Activated CD8-positive, alpha-beta T cell treated with anti-CD3 and anti-CD28 coated beads, Interleukin-2, amount 10 ng/mL, durations not matched to agents 7 days and 5 days (primary cell): ENCODE measurements at regions of chr12 and their contacts with region 1.

Region 1: DNA sequence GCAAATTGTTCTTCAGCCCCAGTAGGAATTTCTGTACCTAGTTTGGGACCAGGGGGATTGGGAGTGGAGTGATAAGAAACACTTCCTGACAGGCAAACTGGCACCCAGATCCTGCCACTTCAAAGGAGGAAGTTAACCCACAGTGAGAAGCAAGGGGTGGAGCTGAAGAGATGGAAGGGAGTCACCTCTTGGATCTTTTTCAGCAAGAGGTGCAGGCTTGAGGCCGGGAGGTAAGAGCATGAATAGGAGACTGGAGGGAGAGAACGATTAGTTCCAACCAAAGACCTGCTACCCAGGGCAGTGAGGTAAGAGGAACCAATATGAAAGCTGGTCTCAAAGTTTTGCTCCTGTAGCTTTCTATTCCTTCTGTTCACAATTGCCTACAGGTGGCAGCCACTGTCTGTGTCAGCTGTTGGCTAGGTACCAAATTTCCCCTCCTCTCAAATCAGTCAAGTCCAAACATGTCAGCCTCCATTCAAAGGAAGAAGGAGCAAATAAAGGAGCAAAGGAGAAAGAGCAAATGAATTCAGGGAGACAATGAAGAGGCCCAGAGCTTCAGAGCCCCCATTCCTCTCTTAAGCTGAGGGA is 14.9 kb upstream of the TAC3 start:
- DNase-seq: peak; percentile 46
- ATAC-seq: peak; percentile 75
- H3K4me3 Mint-ChIP-seq: no peak overlapping the region
- H3K27ac Mint-ChIP-seq: peak overlapping the region; percentile 73
- H3K4me1 Mint-ChIP-seq: peaks cover 35% of the 10 kb centered on the region
- H3K27me3 Mint-ChIP-seq: no peaks in the 10 kb centered on the region

Region 2: GRCh38 chr12:56630160-56630632 is 401.0 kb before region 1 on chr12 and contains the start of gene BAZ2A:
- CTCF ChIA-PET with region 1: no interaction called
- POLR2A ChIA-PET with region 1: no interaction called
- DNase-seq: peak; percentile 92
- ATAC-seq: peak; percentile 74
- H3K4me3 Mint-ChIP-seq: peak within 1 kb of the TSS; percentile 84
- H3K27ac Mint-ChIP-seq: peak within 1 kb of the TSS; percentile 83
- H3K4me1 Mint-ChIP-seq: peaks cover 67% of the 10 kb centered on the region
- H3K27me3 Mint-ChIP-seq: no peaks in the 10 kb centered on the region
- total RNA-seq, gene BAZ2A: 92.2 to 96.0 TPM

Region 3: GRCh38 chr12:57012600-57013465 is 18.4 kb before region 1 on chr12:
- CTCF ChIA-PET with region 1: interaction called, 34 read pairs
- POLR2A ChIA-PET with region 1: no interaction called
- DNase-seq: no peak
- ATAC-seq: no peak
- H3K4me3 Mint-ChIP-seq: no peak overlapping the region
- H3K27ac Mint-ChIP-seq: no peak overlapping the region
- H3K4me1 Mint-ChIP-seq: peaks cover 40% of the 10 kb centered on the region
- H3K27me3 Mint-ChIP-seq: peaks cover 10% of the 10 kb centered on the region

Region 4: DNA sequence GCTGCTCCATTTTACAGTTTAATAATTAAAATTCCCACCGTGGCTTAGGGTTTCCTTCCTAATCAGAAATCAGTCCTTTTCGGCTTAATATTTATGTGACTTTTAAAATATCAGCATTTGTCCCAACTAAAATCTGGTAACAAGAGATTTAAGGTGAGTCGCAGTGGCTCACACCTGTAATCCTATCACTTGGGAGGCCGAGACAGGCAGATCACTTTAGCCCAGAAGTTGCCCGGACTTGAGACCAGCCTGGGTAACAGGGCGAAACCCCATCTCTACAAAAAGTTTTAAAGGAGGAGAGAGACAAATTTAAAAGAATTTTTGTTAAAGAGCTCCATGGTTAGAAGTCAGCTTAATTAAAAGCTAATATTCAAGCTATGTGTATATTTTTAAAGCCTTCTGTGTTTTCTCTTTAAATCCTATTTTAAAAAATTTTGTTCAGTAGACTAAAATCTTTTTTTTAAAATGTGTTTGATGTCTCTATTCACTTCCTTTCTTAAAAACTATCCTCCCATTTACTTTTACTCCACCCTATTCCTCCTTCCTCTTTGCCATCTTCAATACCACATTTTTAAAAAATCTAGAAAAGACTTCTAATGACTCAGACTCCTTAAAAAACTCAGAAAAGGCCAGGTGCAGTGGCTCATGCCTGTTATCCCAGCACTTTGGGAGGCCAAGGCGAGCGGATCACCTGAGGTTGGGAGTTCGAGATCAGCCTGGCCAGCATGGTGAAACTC is 11.1 kb before region 1 on chr12:
- CTCF ChIA-PET with region 1: interaction called, 15 read pairs
- POLR2A ChIA-PET with region 1: no interaction called
- DNase-seq: no peak
- ATAC-seq: no peak
- H3K4me3 Mint-ChIP-seq: no peak overlapping the region
- H3K27ac Mint-ChIP-seq: no peak overlapping the region
- H3K4me1 Mint-ChIP-seq: peaks cover 6% of the 10 kb centered on the region
- H3K27me3 Mint-ChIP-seq: peaks cover 3% of the 10 kb centered on the region

Region 5: DNA sequence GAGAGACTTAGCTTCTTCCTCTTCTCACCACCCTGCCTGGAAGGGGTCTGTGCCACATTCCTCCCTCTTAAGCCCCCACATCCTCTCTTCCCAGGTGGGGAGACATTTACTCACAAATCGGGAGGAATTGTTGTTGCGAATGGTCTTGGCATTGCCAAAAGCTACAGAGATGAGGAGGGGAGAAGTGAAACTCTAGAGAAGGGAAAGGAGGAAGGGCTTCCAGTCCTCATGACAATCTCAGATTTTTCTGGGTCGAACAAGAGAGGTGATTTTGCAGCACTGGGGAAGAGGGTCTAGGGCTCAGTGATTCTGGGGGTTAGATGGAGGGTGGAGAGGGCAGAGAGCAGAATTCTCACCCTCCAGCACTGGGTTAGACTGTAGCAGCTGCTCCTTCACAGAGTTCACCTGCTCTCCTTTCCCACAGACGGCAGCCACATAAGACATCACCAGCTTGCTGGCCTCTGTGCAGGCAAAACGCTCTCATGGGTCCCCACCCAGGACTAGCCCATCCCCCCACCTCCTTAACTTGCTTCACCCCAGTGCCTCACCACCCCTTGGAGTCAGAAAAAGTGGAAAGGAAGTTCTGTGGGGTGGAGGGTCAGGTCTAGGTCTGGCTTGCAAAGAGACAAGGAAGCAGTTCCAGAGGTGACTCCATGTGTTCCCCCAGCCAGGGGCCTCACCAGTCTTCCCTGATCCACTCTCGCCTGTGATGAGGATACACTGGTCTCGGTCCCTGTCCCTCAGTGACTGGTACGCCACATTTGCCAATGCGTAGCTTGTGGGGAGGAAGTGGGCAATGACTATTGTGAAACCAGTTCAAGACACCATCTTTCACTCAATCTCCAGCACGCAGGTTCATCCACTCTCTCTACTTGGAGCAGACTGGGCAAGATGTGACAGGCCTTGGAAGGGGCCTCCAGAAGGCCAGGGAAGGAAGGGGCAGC is 16.0 kb after region 1 on chr12:
- CTCF ChIA-PET with region 1: interaction called, 70 read pairs
- POLR2A ChIA-PET with region 1: interaction called, 9 read pairs
- DNase-seq: peak; percentile 84
- ATAC-seq: peak; percentile 83
- H3K4me3 Mint-ChIP-seq: peak overlapping the region; percentile 49
- H3K27ac Mint-ChIP-seq: peak overlapping the region; percentile 86
- H3K4me1 Mint-ChIP-seq: peaks cover 46% of the 10 kb centered on the region
- H3K27me3 Mint-ChIP-seq: no peaks in the 10 kb centered on the region

Region 6: DNA sequence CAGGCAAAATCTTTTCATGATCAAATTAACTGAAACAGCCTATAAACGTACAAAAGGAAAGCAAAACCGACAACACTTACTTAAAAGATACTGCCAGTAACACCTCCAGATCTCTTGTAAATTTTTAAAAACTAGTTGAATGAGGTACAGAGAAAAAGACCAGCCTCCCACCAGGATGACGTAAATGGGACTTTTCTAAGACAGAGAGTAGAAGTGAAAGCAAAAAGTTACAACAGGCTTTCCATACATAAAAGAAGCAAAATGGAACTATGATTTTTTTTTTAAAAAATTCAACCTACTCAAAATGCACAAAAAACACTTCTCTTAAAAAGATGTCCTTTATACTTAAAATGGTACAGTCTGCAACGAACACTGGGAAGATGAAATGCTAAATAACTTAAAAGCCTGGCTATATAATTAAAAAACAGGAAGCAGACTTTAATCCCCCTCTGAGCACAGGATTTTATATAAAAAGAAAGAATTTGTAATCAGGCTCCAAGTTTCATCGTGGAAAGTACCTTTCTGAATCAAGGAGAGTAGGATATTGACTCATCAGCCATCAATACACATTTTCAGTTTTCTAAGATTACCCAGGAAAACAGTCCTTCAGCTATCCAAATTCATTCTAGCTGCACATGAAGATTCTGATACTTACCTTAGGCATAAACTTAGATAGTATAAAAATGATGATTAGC is 32.9 kb after region 1 on chr12:
- CTCF ChIA-PET with region 1: interaction called, 229 read pairs
- POLR2A ChIA-PET with region 1: interaction called, 6 read pairs
- DNase-seq: peak; percentile 73
- ATAC-seq: peak; percentile 90
- H3K4me3 Mint-ChIP-seq: peak overlapping the region; percentile 76
- H3K27ac Mint-ChIP-seq: peak overlapping the region; percentile 89
- H3K4me1 Mint-ChIP-seq: peaks cover 34% of the 10 kb centered on the region
- H3K27me3 Mint-ChIP-seq: no peaks in the 10 kb centered on the region

Region 7: GRCh38 chr12:57069523-57069922 is 38.3 kb after region 1 on chr12:
- CTCF ChIA-PET with region 1: interaction called, 229 read pairs
- POLR2A ChIA-PET with region 1: no interaction called
- DNase-seq: peak; percentile 78
- ATAC-seq: peak; percentile 95
- H3K4me3 Mint-ChIP-seq: peak overlapping the region; percentile 5
- H3K27ac Mint-ChIP-seq: peak overlapping the region; percentile 76
- H3K4me1 Mint-ChIP-seq: peaks cover 44% of the 10 kb centered on the region
- H3K27me3 Mint-ChIP-seq: no peaks in the 10 kb centered on the region

Region 8: DNA sequence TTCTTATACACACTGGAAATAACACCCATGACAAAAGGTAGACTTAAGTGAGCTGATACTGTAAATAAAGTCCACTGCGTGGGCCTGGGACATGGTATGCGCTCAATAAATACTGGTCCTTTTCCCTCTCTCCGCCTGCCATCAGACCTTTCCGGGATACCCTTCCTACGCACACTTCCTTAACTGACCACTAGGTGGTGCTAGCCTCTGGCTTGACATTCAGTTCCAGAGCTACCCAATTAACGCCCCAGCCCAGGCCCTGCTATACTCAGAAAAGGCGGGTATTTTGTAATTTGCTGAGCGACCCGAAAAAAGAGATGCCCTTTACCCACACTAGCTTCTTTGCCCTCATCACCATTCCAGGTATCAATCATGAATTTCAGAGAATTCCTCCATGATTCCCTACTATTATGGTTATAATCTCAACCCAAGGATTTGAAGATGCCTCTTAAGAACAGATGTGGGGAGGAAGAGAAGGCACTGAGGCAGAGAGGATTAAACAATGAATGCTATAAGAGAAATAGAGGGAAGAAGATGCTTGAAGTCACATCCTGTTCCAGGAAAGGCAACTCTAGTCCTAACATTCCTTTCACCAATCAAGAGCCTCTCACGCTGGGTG is 93.1 kb after region 1 on chr12:
- CTCF ChIA-PET with region 1: interaction called, 23 read pairs
- POLR2A ChIA-PET with region 1: no interaction called
- DNase-seq: peak; percentile 85
- ATAC-seq: peak; percentile 65
- H3K4me3 Mint-ChIP-seq: no peak overlapping the region
- H3K27ac Mint-ChIP-seq: no peak overlapping the region
- H3K4me1 Mint-ChIP-seq: peaks cover 5% of the 10 kb centered on the region
- H3K27me3 Mint-ChIP-seq: peaks cover 29% of the 10 kb centered on the region